ENCODE measurements at regions of chr9 and their contacts with region 1.

Region 1: GRCh38 chr9:89602978-89603766 is 1.6 kb upstream of the GADD45G start:
- DNase-seq: peak; percentile 32
- ATAC-seq: peak; percentile 76
- H3K4me3 ChIP-seq: peak overlapping the region; percentile 45; the same call in 1 of the 2 replicates
- H3K27ac ChIP-seq: no peak overlapping the region
- H3K4me1 ChIP-seq: peaks cover 25% of the 10 kb centered on the region
- H3K27me3 ChIP-seq: peaks cover 8 to 16% of the 10 kb centered on the region in 2 experiments
- CTCF ChIP-seq: peak; percentile 93 to 95 (median 93)
- EP300 ChIP-seq: no peak
- POLR2A ChIP-seq: no peak
- RAD21 ChIP-seq: peak; percentile 100

Region 2: GRCh38 chr9:89690334-89690912 is 87.3 kb after region 1 on chr9:
- CTCF ChIA-PET with region 1: interaction called, 10 read pairs
- POLR2A ChIA-PET with region 1: no interaction called
- RAD21 ChIA-PET with region 1: interaction called, 3 read pairs
- SMC1A ChIA-PET with region 1: interaction called, 6 read pairs
- in situ Hi-C with region 1: no loop called
- intact Hi-C with region 1: no loop called
- DNase-seq: peak; percentile 64
- ATAC-seq: peak; percentile 96
- H3K4me3 ChIP-seq: no peak overlapping the region
- H3K27ac ChIP-seq: no peak overlapping the region
- H3K4me1 ChIP-seq: peaks cover 17% of the 10 kb centered on the region
- H3K27me3 ChIP-seq: peaks cover 0 to 4% of the 10 kb centered on the region in 2 experiments; a peak in 2 of 4 replicates
- CTCF ChIP-seq: no peak
- EP300 ChIP-seq: peak; percentile 81 to 92; a peak in 3 of 4 replicates
- POLR2A ChIP-seq: no peak
- RAD21 ChIP-seq: no peak

Region 3: GRCh38 chr9:89743573-89744361 is 140.6 kb after region 1 on chr9:
- CTCF ChIA-PET with region 1: interaction called, 12 read pairs
- POLR2A ChIA-PET with region 1: interaction called, 3 read pairs
- RAD21 ChIA-PET with region 1: interaction called, 12 read pairs
- SMC1A ChIA-PET with region 1: interaction called, 6 read pairs
- in situ Hi-C with region 1: no loop called
- intact Hi-C with region 1: no loop called
- DNase-seq: peak; percentile 71
- ATAC-seq: peak; percentile 73
- H3K4me3 ChIP-seq: no peak overlapping the region
- H3K27ac ChIP-seq: peak overlapping the region; percentile 58
- H3K4me1 ChIP-seq: peaks cover 48% of the 10 kb centered on the region
- H3K27me3 ChIP-seq: no peaks in the 10 kb centered on the region; a peak in 1 of 4 replicates
- CTCF ChIP-seq: 0 out of 6 replicates have a peak, but pooled peaks of 2 of the 3 experiments have one; percentile 11 to 12
- EP300 ChIP-seq: 0 out of 4 replicates have a peak, but pooled peaks of 1 of the 2 experiments have one; percentile 10
- POLR2A ChIP-seq: no peak
- RAD21 ChIP-seq: 0 out of 2 replicates have a peak, but pooled peaks have one; percentile 2

Region 4: DNA sequence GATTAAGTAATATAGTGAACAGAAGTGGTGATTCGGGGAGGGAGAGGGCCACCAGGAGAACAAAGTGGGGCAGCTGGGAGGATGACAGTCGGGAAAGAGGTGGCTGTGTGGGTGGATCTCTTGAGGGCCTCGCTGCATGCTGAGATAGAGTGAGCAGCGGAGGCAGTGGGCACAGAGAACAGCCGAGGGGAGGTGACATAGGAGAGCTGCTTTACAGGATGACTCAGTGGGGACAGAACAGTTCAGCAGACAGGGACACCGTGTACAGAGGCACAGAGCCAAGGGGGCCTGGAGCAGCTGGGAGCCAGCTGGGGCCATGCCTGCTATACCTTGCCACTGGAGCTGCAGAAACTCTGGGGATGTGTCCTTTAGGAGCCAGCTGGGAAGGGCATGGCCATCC is 275.5 kb after region 1 on chr9:
- CTCF ChIA-PET with region 1: interaction called, 15 read pairs
- POLR2A ChIA-PET with region 1: no interaction called
- RAD21 ChIA-PET with region 1: interaction called, 14 read pairs
- SMC1A ChIA-PET with region 1: interaction called, 7 read pairs
- in situ Hi-C with region 1: no loop called
- intact Hi-C with region 1: no loop called
- DNase-seq: no peak
- ATAC-seq: peak; percentile 22; the same call in 1 of the 3 replicates
- H3K4me3 ChIP-seq: no peak overlapping the region
- H3K27ac ChIP-seq: no peak overlapping the region
- H3K4me1 ChIP-seq: no peaks in the 10 kb centered on the region
- H3K27me3 ChIP-seq: peaks cover 2 to 3% of the 10 kb centered on the region in 2 experiments; a peak in 3 of 4 replicates
- CTCF ChIP-seq: no peak
- EP300 ChIP-seq: no peak
- POLR2A ChIP-seq: no peak
- RAD21 ChIP-seq: no peak

Region 5: DNA sequence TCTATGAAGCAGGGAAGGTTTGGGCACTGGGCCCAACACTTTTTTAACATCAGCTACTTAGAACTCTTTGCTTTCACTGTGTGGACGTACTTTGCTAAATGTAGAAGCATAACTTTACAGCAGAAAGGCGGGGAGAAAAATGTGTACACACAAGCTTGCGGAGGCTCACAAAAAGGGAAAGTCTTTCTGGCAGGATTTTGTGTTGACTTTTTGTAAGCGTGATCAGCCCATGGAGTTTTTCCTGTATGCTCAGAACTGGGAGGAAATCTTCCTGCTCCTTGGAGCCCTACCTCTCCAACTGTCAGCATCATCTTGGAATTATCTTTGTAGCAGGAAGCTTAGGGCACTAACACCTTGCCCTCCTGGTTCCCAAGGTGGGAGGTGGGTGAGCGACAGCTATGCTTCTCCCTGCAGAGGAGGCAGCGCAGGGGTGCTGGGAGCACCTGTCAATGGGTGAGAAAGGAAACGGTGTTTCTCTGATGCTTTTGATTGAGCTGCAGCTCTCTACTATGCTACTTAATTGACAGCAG is 323.6 kb after region 1 on chr9:
- CTCF ChIA-PET with region 1: interaction called, 36 read pairs
- POLR2A ChIA-PET with region 1: no interaction called
- RAD21 ChIA-PET with region 1: interaction called, 10 read pairs
- SMC1A ChIA-PET with region 1: interaction called, 6 read pairs
- in situ Hi-C with region 1: no loop called
- intact Hi-C with region 1: no loop called
- DNase-seq: no peak
- ATAC-seq: no peak
- H3K4me3 ChIP-seq: no peak overlapping the region
- H3K27ac ChIP-seq: no peak overlapping the region
- H3K4me1 ChIP-seq: no peaks in the 10 kb centered on the region
- H3K27me3 ChIP-seq: peaks cover 1 to 8% of the 10 kb centered on the region in 2 experiments; a peak in 3 of 4 replicates
- CTCF ChIP-seq: no peak
- EP300 ChIP-seq: no peak
- POLR2A ChIP-seq: no peak
- RAD21 ChIP-seq: no peak

Region 6: GRCh38 chr9:90095682-90096081 is 492.5 kb after region 1 on chr9:
- CTCF ChIA-PET with region 1: interaction called, 282 read pairs
- POLR2A ChIA-PET with region 1: interaction called, 4 read pairs
- RAD21 ChIA-PET with region 1: interaction called, 125 read pairs
- SMC1A ChIA-PET with region 1: interaction called, 89 read pairs
- in situ Hi-C with region 1: loop called (anchors 5 kb)
- intact Hi-C with region 1: no loop called
- DNase-seq: no peak
- ATAC-seq: no peak
- H3K4me3 ChIP-seq: no peak overlapping the region
- H3K27ac ChIP-seq: no peak overlapping the region
- H3K4me1 ChIP-seq: peaks cover 3% of the 10 kb centered on the region; the same call in 1 of the 2 replicates
- H3K27me3 ChIP-seq: no peaks in the 10 kb centered on the region
- CTCF ChIP-seq: no peak
- EP300 ChIP-seq: no peak
- POLR2A ChIP-seq: no peak
- RAD21 ChIP-seq: no peak

Region 7: GRCh38 chr9:90219548-90220118 is 616.5 kb after region 1 on chr9:
- CTCF ChIA-PET with region 1: interaction called, 3 read pairs
- POLR2A ChIA-PET with region 1: no interaction called
- RAD21 ChIA-PET with region 1: no interaction called
- SMC1A ChIA-PET with region 1: no interaction called
- in situ Hi-C with region 1: no loop called
- intact Hi-C with region 1: loop called (anchors 10 kb)
- DNase-seq: no peak
- ATAC-seq: peak; percentile 61
- H3K4me3 ChIP-seq: no peak overlapping the region
- H3K27ac ChIP-seq: no peak overlapping the region
- H3K4me1 ChIP-seq: no peaks in the 10 kb centered on the region
- H3K27me3 ChIP-seq: no peaks in the 10 kb centered on the region
- CTCF ChIP-seq: peak; percentile 47 to 66 (median 47); a peak in 5 of 6 replicates
- EP300 ChIP-seq: no peak
- POLR2A ChIP-seq: no peak
- RAD21 ChIP-seq: peak; percentile 65

Measured in GM12878 (cell line).